Activated B cell treated with CpG ODN at 0.5 μM for 24 hours (primary cell): ENCODE measurements at regions of chr6 and their contacts with region 1.

Region 1: DNA sequence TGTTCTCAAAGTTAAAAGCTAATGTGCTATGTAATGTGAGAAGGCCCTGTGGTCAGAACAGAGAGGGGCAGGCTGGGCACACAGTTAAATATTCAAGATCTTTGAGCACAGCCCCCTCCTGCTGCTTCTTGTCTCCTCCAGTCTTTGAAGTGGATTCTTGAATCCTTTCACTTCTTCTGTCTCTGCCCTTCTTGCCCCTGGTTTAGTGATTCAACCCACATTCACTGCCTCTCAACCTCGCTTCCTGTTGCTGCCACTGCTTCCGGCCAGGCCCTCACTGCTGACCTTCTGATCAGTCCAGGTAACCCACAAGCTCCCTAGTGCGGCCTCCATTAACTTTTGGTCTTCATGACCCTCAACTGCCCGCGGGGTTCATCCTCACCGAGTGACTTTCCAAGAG is 417.3 kb upstream of the NOX3 start:
- DNase-seq: no peak
- ATAC-seq: no peak
- H3K4me3 Mint-ChIP-seq: no peak overlapping the region
- H3K27ac Mint-ChIP-seq: no peak overlapping the region
- H3K4me1 Mint-ChIP-seq: peaks cover 4% of the 10 kb centered on the region
- H3K27me3 Mint-ChIP-seq: no peaks in the 10 kb centered on the region
- CTCF ChIP-seq: no peak

Region 2: GRCh38 chr6:155024391-155025027 is 848.5 kb before region 1 on chr6:
- CTCF ChIA-PET with region 1: no interaction called
- POLR2A ChIA-PET with region 1: no interaction called
- intact Hi-C with region 1: loop called (anchors 5 kb)
- DNase-seq: no peak
- ATAC-seq: no peak
- H3K4me3 Mint-ChIP-seq: no peak overlapping the region
- H3K27ac Mint-ChIP-seq: no peak overlapping the region
- H3K4me1 Mint-ChIP-seq: no peaks in the 10 kb centered on the region
- H3K27me3 Mint-ChIP-seq: no peaks in the 10 kb centered on the region
- CTCF ChIP-seq: no peak

Region 3: DNA sequence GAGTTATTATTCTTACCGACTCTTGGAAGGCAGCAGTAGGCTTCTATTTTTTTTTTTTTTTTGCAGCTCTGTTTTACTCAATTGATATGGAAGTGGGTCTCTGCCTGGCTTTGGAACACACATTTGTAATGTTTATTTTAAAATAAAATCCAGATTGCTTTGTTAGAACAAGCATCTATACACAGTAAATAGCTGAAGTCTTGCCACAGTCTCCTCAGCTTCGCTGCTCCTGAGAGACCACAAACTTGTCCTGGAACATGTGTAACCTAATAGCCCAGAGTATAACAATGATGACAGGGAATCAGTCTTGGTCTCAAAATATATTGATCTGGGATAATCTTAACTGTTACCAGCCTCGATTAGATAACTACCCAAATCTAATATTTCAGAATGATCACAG is 117.5 kb before region 1 on chr6:
- CTCF ChIA-PET with region 1: no interaction called
- POLR2A ChIA-PET with region 1: no interaction called
- intact Hi-C with region 1: no loop called
- DNase-seq: no peak
- ATAC-seq: no peak
- H3K4me3 Mint-ChIP-seq: no peak overlapping the region
- H3K27ac Mint-ChIP-seq: no peak overlapping the region
- H3K4me1 Mint-ChIP-seq: no peaks in the 10 kb centered on the region
- H3K27me3 Mint-ChIP-seq: no peaks in the 10 kb centered on the region
- CTCF ChIP-seq: no peak